ENCODE measurements at regions of chr6 and their contacts with region 1.

Region 1: GRCh38 chr6:33585403-33586107 is 5.5 kb upstream of the BAK1 start:
- DNase-seq: peak; percentile 69
- H3K4me3 ChIP-seq: no peak overlapping the region
- H3K27ac ChIP-seq: no peak overlapping the region
- H3K4me1 ChIP-seq: peaks cover 21% of the 10 kb centered on the region
- H3K27me3 ChIP-seq: no peaks in the 10 kb centered on the region
- CTCF ChIP-seq: peak; percentile 98 to 99

Region 2: DNA sequence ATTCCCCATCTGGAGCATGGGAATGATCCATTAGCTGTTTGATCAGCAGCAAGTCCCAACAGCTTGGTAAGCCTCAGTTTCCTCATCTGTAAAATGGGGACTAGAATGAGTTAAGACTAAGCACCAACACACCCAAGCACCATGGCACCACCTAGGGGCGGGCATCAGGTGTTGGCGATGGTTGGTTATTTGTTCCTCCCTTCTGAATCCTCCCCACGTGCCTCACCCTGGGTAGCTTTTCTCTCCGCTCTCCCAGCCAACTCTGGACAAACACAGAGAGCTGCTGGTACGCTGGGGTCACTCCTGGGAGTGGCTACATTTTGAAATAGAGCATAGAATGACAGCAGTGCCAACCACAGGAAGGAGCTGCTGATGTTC is 22.2 kb after region 1 on chr6:
- CTCF ChIA-PET with region 1: interaction called, 4 read pairs
- dilution Hi-C with region 1: no loop called
- in situ Hi-C with region 1: no loop called
- intact Hi-C with region 1: loop called (anchors 1 kb)
- DNase-seq: no peak
- H3K4me3 ChIP-seq: no peak overlapping the region
- H3K27ac ChIP-seq: no peak overlapping the region
- H3K4me1 ChIP-seq: peaks cover 49% of the 10 kb centered on the region
- H3K27me3 ChIP-seq: no peaks in the 10 kb centered on the region
- CTCF ChIP-seq: peak; percentile 37 to 55

Region 3: DNA sequence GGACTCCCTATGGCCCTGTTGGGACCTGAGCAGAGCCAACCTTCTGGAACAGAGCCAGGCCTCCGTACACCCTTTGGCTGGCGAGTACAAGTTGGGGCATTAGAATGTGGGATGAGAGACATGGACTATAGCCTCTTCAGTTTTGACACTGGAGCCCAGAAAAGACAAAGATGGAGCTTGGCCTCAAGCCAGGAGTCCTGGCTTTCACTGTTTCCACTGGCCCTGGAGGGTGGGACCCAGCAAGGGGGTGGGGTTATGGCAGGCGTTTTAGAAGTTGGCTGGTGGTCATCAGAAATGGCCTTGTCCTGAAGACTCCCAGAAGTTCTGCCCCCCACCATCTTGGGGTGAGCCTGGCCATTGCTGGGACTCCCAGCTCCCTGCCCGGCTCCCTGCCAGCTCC is 57.3 kb after region 1 on chr6:
- CTCF ChIA-PET with region 1: no interaction called
- dilution Hi-C with region 1: no loop called
- in situ Hi-C with region 1: no loop called
- intact Hi-C with region 1: loop called (anchors 2 kb)
- DNase-seq: no peak
- H3K4me3 ChIP-seq: no peak overlapping the region
- H3K27ac ChIP-seq: no peak overlapping the region
- H3K4me1 ChIP-seq: peaks cover 16% of the 10 kb centered on the region
- H3K27me3 ChIP-seq: no peaks in the 10 kb centered on the region
- CTCF ChIP-seq: no peak

Region 4: DNA sequence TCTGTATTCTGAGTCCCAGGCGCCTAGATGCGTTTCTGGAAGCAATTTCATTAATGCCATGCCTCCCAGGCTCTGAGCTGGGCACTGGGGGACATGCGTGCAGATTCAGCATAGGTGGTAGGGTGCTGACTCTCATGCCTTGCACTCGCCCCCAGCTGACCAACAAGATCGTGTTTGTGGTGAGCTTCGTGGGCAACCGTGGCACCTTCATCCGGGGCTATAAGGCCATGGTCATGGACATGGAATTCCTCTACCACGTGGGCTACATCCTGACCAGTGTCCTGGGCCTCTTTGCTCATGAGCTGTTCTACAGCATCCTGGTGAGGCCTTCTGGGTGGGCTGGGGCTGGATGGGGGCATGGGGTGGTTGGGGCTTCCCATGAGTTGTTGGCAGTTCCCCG is 104.3 kb after region 1 on chr6:
- CTCF ChIA-PET with region 1: no interaction called
- dilution Hi-C with region 1: loop called (anchors 5 kb)
- in situ Hi-C with region 1: no loop called
- intact Hi-C with region 1: no loop called
- DNase-seq: no peak
- H3K4me3 ChIP-seq: no peak overlapping the region
- H3K27ac ChIP-seq: no peak overlapping the region
- H3K4me1 ChIP-seq: peaks cover 18% of the 10 kb centered on the region
- H3K27me3 ChIP-seq: no peaks in the 10 kb centered on the region
- CTCF ChIP-seq: no peak

Region 5: DNA sequence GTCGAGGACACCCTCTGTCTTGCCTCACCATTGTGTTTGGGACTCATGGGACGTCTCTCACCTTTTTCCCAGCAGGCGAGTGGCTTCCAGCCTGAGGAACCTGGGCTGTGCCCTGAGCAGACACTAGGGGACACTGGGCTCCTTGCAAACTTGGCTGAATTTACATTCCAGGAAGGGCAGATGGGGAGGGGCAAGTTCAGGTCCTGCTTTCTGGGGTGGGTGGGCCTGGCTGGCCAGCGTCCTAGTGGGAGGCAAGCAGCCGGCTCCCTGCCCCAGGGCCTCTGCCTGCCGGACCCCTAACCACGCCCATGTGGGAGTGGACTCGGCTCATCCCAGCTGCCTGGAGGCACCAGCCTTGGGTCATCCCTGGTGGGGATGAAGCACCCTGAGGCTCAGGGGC is 266.4 kb after region 1 on chr6:
- CTCF ChIA-PET with region 1: no interaction called
- dilution Hi-C with region 1: no loop called
- in situ Hi-C with region 1: no loop called
- intact Hi-C with region 1: no loop called
- DNase-seq: no peak
- H3K4me3 ChIP-seq: no peak overlapping the region
- H3K27ac ChIP-seq: no peak overlapping the region
- H3K4me1 ChIP-seq: peaks cover 4% of the 10 kb centered on the region
- H3K27me3 ChIP-seq: no peaks in the 10 kb centered on the region
- CTCF ChIP-seq: peak; percentile 50 to 78

Region 6: GRCh38 chr6:34027445-34027936 is 441.9 kb after region 1 on chr6:
- CTCF ChIA-PET with region 1: no interaction called
- dilution Hi-C with region 1: no loop called
- in situ Hi-C with region 1: no loop called
- intact Hi-C with region 1: loop called (anchors 5 kb)
- DNase-seq: peak; percentile 11
- H3K4me3 ChIP-seq: no peak overlapping the region
- H3K27ac ChIP-seq: no peak overlapping the region
- H3K4me1 ChIP-seq: no peaks in the 10 kb centered on the region
- H3K27me3 ChIP-seq: no peaks in the 10 kb centered on the region
- CTCF ChIP-seq: peak; percentile 58 to 85